ENCODE measurements at regions of chr13 and their contacts with region 1.

Region 1: DNA sequence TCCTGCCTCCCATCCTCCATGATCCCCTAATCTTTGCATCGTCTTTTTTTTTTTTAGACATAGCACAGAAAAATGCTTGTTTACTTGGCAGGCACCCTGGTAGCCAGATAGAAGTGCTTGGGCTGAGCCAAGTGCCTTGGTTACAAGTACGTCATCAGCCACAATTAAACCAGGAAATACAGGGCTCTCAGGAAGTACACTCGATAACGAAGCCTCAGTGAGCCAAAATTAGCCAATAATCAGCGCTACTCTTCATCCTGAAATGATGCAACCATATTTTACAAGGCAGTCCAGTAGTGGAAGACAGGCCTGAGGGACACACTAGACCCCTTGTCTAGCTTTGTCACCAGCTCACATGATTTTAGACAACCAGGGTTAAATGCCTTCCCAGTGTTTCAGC is 194.0 kb upstream of the NBEA start:
- DNase-seq: peak in 4 of 5 donors; percentile 70 to 75 (median 72)
- ATAC-seq: peak; percentile 97 to 98 (median 98)
- H3K4me3 ChIP-seq: no peak overlapping the region
- H3K27ac ChIP-seq: peak overlapping the region; percentile 26 to 83 (median 71)
- H3K4me1 ChIP-seq: peaks cover 3 to 42% (median 28%) of the 10 kb centered on the region in 12 donors
- H3K27me3 ChIP-seq: no peaks in the 10 kb centered on the region
- CTCF ChIP-seq: no peak
- POLR2A ChIP-seq: no peak

Region 2: DNA sequence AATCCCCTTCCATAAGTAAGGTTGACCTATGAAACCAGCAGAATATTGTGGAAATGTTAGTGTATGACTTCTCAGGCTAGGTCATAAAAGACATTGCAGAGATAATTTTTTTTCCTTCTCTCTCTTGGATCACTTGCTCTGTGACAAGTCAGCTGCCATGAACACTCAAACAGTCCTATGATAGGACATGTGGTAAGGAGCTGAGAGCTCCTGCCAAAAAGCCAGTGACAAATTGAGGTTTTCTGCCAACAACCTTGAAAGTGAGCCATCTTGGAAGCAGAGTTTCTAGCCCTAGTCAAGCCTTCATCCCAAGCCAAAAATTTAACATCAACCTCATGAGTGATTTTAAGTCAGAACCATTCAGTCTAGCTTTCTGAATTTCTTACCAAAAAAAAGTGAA is 76.9 kb before region 1 on chr13:
- intact Hi-C with region 1: loop called in 2 of 10 experiments (anchors 2 to 5 kb)
- DNase-seq: peak in 4 of 5 donors; percentile 44 to 65 (median 49)
- ATAC-seq: peak; percentile 86 to 95 (median 93)
- H3K4me3 ChIP-seq: no peak overlapping the region
- H3K27ac ChIP-seq: peak overlapping the region in 11 of 12 donors; percentile 14 to 81 (median 58)
- H3K4me1 ChIP-seq: peaks cover 0 to 29% (median 7%) of the 10 kb centered on the region in 12 donors
- H3K27me3 ChIP-seq: no peaks in the 10 kb centered on the region
- CTCF ChIP-seq: no peak
- POLR2A ChIP-seq: no peak

Region 3: GRCh38 chr13:34803756-34804155 is 55.7 kb after region 1 on chr13:
- intact Hi-C with region 1: no loop called
- DNase-seq: no peak
- ATAC-seq: no peak
- H3K4me3 ChIP-seq: no peak overlapping the region
- H3K27ac ChIP-seq: no peak overlapping the region
- H3K4me1 ChIP-seq: no peaks in the 10 kb centered on the region
- H3K27me3 ChIP-seq: no peaks in the 10 kb centered on the region
- CTCF ChIP-seq: no peak
- POLR2A ChIP-seq: no peak

Measured in heart left ventricle (tissue), 16 donors.